Caco-2 (cell line): ENCODE measurements at regions of chr11 and their contacts with region 1.

Region 1: GRCh38 chr11:39712581-39712980 is 1746.9 kb downstream of the LRRC4C start:
- DNase-seq: no peak
- H3K4me3 ChIP-seq: no peak overlapping the region
- H3K4me3 Mint-ChIP-seq: no peak overlapping the region
- H3K27ac Mint-ChIP-seq: no peak overlapping the region
- H3K4me1 ChIP-seq: peaks cover 19% of the 10 kb centered on the region
- H3K4me1 Mint-ChIP-seq: peaks cover 15% of the 10 kb centered on the region
- H3K27me3 ChIP-seq: no peaks in the 10 kb centered on the region
- H3K27me3 Mint-ChIP-seq: no peaks in the 10 kb centered on the region
- CTCF ChIP-seq: no peak

Region 2: DNA sequence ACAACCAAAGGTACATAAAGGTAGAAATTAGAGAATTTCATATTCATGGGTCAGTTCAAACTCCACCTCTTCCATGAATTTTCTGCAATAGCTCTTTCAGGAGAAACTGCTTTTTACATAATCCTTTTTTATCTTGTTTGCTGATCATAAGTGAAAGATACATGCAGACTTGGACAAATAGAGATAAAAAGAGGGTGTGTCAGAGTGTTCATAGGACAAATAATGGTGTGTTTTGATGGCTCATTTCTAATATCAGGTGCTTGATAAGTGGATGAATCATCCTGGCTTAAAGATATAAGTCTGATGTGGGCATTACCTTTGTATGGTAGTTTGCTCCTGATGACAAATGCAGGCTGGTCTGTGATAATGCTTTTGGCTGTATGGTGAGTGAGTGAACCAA is 222.6 kb before region 1 on chr11:
- CTCF ChIA-PET with region 1: no interaction called
- POLR2A ChIA-PET with region 1: no interaction called
- intact Hi-C with region 1: loop called (anchors 10 kb)
- DNase-seq: peak in 1 of 2 experiments; percentile 37
- H3K4me3 ChIP-seq: no peak overlapping the region
- H3K4me3 Mint-ChIP-seq: no peak overlapping the region
- H3K27ac Mint-ChIP-seq: no peak overlapping the region
- H3K4me1 ChIP-seq: peaks cover 15% of the 10 kb centered on the region
- H3K4me1 Mint-ChIP-seq: peaks cover 11% of the 10 kb centered on the region
- H3K27me3 ChIP-seq: no peaks in the 10 kb centered on the region
- H3K27me3 Mint-ChIP-seq: no peaks in the 10 kb centered on the region
- CTCF ChIP-seq: no peak

Region 3: GRCh38 chr11:39668640-39669039 is 43.9 kb before region 1 on chr11:
- CTCF ChIA-PET with region 1: no interaction called
- POLR2A ChIA-PET with region 1: no interaction called
- intact Hi-C with region 1: no loop called
- DNase-seq: no peak
- H3K4me3 ChIP-seq: no peak overlapping the region
- H3K4me3 Mint-ChIP-seq: no peak overlapping the region
- H3K27ac Mint-ChIP-seq: no peak overlapping the region
- H3K4me1 ChIP-seq: no peaks in the 10 kb centered on the region
- H3K4me1 Mint-ChIP-seq: no peaks in the 10 kb centered on the region
- H3K27me3 ChIP-seq: no peaks in the 10 kb centered on the region
- H3K27me3 Mint-ChIP-seq: peaks cover 3% of the 10 kb centered on the region
- CTCF ChIP-seq: no peak

Region 4: DNA sequence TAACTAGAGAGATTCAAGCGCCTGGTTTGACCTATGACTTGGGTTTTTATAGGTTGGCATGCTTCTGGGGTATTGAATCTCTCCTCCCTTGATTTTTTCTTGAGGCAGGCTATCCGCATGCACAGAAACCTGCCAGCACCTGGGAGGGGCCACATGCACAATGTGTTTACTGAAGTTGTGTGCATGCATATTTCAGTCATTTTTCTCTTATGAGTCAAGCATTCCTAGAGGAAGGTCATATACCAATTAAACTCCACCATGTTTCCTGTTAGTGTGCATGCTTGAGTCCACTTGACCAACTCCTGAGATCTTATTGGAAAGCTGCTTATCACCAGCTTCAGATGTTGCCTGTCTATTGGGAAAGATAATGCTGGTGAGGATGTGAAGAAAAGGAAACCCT is 28.5 kb after region 1 on chr11:
- CTCF ChIA-PET with region 1: no interaction called
- POLR2A ChIA-PET with region 1: no interaction called
- intact Hi-C with region 1: loop called (anchors 1 kb)
- DNase-seq: peak; percentile 51 to 75
- H3K4me3 ChIP-seq: no peak overlapping the region
- H3K4me3 Mint-ChIP-seq: no peak overlapping the region
- H3K27ac Mint-ChIP-seq: no peak overlapping the region
- H3K4me1 ChIP-seq: peaks cover 20% of the 10 kb centered on the region
- H3K4me1 Mint-ChIP-seq: peaks cover 8% of the 10 kb centered on the region
- H3K27me3 ChIP-seq: no peaks in the 10 kb centered on the region
- H3K27me3 Mint-ChIP-seq: no peaks in the 10 kb centered on the region
- CTCF ChIP-seq: no peak